Activated CD4-positive, alpha-beta T cell treated with anti-CD3 and anti-CD28 coated beads for 36 hours (primary cell): ENCODE measurements at regions of chr12 and their contacts with region 1.

Region 1: DNA sequence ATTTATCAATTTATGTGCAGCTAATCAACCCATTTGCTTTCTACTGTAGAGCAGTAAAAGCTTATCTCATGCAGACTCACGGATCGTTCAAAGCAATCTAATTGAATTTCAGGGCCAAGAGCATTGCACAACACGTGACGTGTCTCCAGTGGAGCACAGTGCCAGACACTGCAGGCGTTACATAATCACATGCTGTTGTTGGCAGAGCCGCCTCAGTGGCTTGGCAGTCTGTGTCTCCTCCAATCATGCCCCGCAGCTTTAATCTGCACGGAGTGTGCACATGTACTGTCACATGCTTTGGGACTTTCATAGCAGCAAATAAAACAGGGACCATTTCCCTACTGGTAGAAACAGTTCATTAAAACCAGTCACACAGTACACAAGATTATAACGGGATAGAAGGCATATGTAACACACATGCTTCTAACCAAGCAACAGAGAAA is 309.3 kb downstream of the ITPR2 start:
- DNase-seq: no peak
- ATAC-seq: no peak
- H3K4me3 Mint-ChIP-seq: no peak overlapping the region
- H3K27ac Mint-ChIP-seq: no peak overlapping the region
- H3K4me1 Mint-ChIP-seq: peaks cover 10% of the 10 kb centered on the region
- H3K27me3 Mint-ChIP-seq: no peaks in the 10 kb centered on the region

Region 2: DNA sequence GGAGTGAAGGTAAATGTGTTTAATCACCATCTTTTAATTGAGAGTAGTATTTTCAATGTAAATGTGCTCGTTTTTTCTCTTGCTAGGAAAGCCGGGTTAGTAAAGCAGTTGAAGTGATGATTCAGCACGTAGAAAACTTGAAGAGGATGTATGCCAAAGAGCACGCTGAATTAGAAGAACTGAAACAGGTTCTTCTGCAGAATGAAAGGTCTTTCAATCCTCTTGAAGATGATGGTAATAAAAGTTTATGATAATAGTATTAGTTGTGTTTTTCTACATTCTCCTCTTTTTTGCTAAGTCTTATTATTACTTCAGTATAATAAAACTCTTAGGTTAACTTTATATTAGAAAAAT is 1422.7 kb before region 1 on chr12:
- CTCF ChIA-PET with region 1: no interaction called
- POLR2A ChIA-PET with region 1: no interaction called
- intact Hi-C with region 1: no loop called
- DNase-seq: no peak
- ATAC-seq: no peak
- H3K4me3 Mint-ChIP-seq: no peak overlapping the region
- H3K27ac Mint-ChIP-seq: peak overlapping the region; percentile 17
- H3K4me1 Mint-ChIP-seq: no peaks in the 10 kb centered on the region
- H3K27me3 Mint-ChIP-seq: no peaks in the 10 kb centered on the region

Region 3: GRCh38 chr12:26113853-26114719 is 409.6 kb before region 1 on chr12:
- CTCF ChIA-PET with region 1: interaction called, 3 read pairs
- POLR2A ChIA-PET with region 1: no interaction called
- intact Hi-C with region 1: loop called (anchors 5 to 10 kb)
- DNase-seq: peak; percentile 87
- ATAC-seq: peak; percentile 88
- H3K4me3 Mint-ChIP-seq: peak overlapping the region; percentile 69
- H3K27ac Mint-ChIP-seq: peak overlapping the region; percentile 25
- H3K4me1 Mint-ChIP-seq: peaks cover 11% of the 10 kb centered on the region
- H3K27me3 Mint-ChIP-seq: peaks cover 37% of the 10 kb centered on the region

Region 4: GRCh38 chr12:26119391-26119981 is 404.2 kb before region 1 on chr12:
- CTCF ChIA-PET with region 1: interaction called, 3 read pairs
- POLR2A ChIA-PET with region 1: no interaction called
- intact Hi-C with region 1: loop called (anchors 5 to 10 kb)
- DNase-seq: no peak
- ATAC-seq: no peak
- H3K4me3 Mint-ChIP-seq: no peak overlapping the region
- H3K27ac Mint-ChIP-seq: no peak overlapping the region
- H3K4me1 Mint-ChIP-seq: peaks cover 23% of the 10 kb centered on the region
- H3K27me3 Mint-ChIP-seq: peaks cover 63% of the 10 kb centered on the region

Region 5: GRCh38 chr12:26434299-26435068 is 89.2 kb before region 1 on chr12:
- CTCF ChIA-PET with region 1: no interaction called
- POLR2A ChIA-PET with region 1: no interaction called
- intact Hi-C with region 1: loop called in 1 of 2 experiments (anchors 10 kb)
- DNase-seq: no peak
- ATAC-seq: peak; percentile 42
- H3K4me3 Mint-ChIP-seq: no peak overlapping the region
- H3K27ac Mint-ChIP-seq: no peak overlapping the region
- H3K4me1 Mint-ChIP-seq: no peaks in the 10 kb centered on the region
- H3K27me3 Mint-ChIP-seq: no peaks in the 10 kb centered on the region

Region 6: DNA sequence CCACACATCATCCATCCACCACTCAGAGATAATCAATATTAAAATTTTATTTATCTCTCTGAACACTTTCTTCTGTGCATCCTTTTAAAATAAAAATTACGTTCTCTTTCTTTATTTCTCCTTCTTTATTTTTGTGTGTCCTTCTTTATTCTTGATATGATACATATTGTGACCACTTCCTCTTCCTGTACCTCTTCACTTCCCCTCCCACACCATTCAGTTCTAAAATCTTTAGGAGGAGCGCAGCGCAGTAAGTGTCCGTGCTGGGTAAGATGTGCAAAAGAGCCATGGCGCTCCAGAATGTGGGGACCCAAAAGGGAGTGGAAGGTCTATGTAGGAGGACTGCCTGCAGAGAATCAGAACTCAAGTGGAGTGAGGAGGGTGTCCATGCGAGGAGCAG is 52.5 kb after region 1 on chr12:
- CTCF ChIA-PET with region 1: no interaction called
- POLR2A ChIA-PET with region 1: no interaction called
- intact Hi-C with region 1: no loop called
- DNase-seq: no peak
- ATAC-seq: no peak
- H3K4me3 Mint-ChIP-seq: no peak overlapping the region
- H3K27ac Mint-ChIP-seq: peak overlapping the region; percentile 11
- H3K4me1 Mint-ChIP-seq: peaks cover 13% of the 10 kb centered on the region
- H3K27me3 Mint-ChIP-seq: no peaks in the 10 kb centered on the region